ENCODE measurements at regions of chr14 and their contacts with region 1.

Region 1: GRCh38 chr14:55523217-55523720 is 56.7 kb upstream of the KTN1 start:
- DNase-seq: no peak
- ATAC-seq: no peak
- H3K4me3 ChIP-seq: no peak overlapping the region
- H3K27ac ChIP-seq: no peak overlapping the region
- H3K4me1 ChIP-seq: no peaks in the 10 kb centered on the region
- H3K27me3 ChIP-seq: no peaks in the 10 kb centered on the region
- CTCF ChIP-seq: no peak

Region 2: DNA sequence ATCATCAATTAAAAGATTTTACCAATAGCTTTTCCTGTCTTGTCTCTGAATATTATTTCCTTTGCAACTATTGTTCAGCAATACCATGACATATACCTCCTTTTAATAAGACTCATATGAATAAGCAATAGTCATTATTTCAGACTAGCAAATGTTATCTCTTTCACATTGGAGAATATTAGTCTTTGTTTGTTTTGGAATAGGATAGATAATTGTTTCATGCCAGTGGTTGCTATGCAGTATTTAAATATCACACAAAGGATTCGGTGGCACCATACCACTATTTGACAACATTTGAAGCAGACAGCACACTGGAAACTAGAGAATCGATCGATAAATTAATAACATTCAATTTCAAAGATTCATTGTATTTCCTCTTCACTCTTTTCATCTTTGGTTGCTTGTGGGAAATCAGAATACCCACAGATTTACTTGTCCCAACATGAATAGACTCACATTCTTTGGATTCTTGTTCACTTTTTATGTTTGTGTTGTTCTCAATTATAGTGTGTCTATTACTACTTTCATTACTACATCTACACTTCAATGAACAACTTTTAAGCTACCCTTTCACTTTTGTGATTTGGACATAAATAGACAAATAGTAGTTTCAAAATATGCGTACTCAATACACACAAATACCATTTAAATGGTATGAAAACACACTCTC is 40.2 kb before region 1 on chr14:
- intact Hi-C with region 1: loop called in 1 of 2 experiments (anchors 2 kb)
- DNase-seq: no peak
- ATAC-seq: no peak
- H3K4me3 ChIP-seq: no peak overlapping the region
- H3K27ac ChIP-seq: no peak overlapping the region
- H3K4me1 ChIP-seq: no peaks in the 10 kb centered on the region
- H3K27me3 ChIP-seq: no peaks in the 10 kb centered on the region
- CTCF ChIP-seq: no peak

Measured in psoas muscle (tissue), 8 donors.